H1 (cell line): ENCODE measurements at regions of chr6 and their contacts with region 1.

Region 1: DNA sequence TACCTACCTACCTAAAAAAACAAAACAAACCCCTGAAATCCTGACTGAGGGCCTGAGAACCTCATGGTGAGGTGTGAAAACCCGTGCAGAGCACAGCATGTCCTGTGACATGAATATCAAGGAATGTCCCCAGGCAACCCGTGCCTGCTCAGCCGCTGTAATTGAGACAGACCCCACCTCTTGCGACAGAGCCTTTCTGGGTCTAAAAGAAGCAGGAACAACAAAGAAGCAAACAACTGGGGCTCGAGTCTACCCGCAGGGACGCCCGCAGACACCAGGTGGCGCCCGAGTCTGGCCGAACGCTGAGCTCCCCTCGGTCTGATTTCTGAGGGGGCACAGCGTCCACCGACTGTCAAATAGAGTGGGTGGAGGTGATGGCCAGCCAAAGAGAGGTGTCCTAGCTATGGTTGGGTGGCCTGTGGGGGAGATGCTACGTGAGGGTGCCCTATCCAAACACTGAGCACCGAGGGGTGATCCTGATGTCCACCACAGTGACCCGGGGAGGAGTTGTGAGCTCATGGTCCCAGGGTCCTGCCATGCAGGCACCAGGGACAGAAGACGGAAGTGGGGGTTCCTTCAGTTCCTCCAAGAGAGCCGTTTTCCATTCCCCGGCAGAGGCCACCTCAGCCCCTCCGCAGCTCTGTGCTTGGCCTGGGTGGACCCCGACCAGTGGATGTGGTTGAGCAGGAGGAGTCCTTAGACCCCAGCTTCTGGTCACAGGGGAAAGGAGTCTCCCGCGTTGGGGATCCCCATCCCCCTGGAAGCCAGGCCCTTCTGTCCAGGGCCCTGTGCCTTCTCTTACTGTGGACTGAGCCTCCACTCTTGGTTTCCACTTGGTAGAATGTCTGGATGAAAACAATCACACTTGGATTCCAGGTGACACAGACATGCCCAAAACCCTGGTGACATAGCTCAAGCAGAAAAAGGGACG is 268.2 kb downstream of the CDC5L start:
- DNase-seq: peak; percentile 77 to 97
- H3K4me3 ChIP-seq: no peak overlapping the region
- H3K27ac ChIP-seq: no peak overlapping the region
- H3K4me1 ChIP-seq: no peaks in the 10 kb centered on the region; a peak in 3 of 7 replicates
- H3K27me3 ChIP-seq: no peaks in the 10 kb centered on the region; a peak in 1 of 7 replicates
- CTCF ChIP-seq: peak; percentile 88 to 94 (median 91)
- EP300 ChIP-seq: no peak
- POLR2A ChIP-seq: no peak
- RAD21 ChIP-seq: peak; percentile 99 to 100

Region 2: DNA sequence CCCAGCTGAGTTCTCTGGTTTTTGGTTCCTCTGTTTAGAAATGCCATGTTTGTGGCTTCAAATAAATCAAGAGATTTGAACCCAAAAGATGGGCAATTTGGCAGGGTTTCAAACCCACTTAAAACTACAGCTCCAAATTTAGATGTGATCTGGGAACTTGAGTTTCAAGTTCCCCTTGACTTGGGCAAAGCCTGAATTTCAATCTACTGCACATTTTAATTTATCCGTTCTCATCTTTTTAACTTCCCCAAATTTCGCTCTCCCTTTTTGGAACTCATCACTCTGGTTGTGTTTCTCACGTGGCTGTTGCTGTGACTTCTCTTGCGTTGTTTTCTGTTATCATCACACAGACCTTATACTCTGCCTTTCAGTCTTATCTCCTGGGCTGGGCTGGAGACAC is 37.3 kb before region 1 on chr6:
- CTCF ChIA-PET with region 1: interaction called, 11 read pairs
- POLR2A ChIA-PET with region 1: no interaction called
- DNase-seq: no peak
- H3K4me3 ChIP-seq: no peak overlapping the region
- H3K27ac ChIP-seq: no peak overlapping the region
- H3K4me1 ChIP-seq: peaks cover 0 to 10% (median 5%) of the 10 kb centered on the region in 4 experiments; a peak in 3 of 7 replicates
- H3K27me3 ChIP-seq: 0 out of 7 replicates have a peak, but pooled peaks cover 0 to 2% (median 0%) of the 10 kb centered on the region in 4 experiments
- CTCF ChIP-seq: no peak
- EP300 ChIP-seq: no peak
- POLR2A ChIP-seq: no peak
- RAD21 ChIP-seq: no peak

Region 3: DNA sequence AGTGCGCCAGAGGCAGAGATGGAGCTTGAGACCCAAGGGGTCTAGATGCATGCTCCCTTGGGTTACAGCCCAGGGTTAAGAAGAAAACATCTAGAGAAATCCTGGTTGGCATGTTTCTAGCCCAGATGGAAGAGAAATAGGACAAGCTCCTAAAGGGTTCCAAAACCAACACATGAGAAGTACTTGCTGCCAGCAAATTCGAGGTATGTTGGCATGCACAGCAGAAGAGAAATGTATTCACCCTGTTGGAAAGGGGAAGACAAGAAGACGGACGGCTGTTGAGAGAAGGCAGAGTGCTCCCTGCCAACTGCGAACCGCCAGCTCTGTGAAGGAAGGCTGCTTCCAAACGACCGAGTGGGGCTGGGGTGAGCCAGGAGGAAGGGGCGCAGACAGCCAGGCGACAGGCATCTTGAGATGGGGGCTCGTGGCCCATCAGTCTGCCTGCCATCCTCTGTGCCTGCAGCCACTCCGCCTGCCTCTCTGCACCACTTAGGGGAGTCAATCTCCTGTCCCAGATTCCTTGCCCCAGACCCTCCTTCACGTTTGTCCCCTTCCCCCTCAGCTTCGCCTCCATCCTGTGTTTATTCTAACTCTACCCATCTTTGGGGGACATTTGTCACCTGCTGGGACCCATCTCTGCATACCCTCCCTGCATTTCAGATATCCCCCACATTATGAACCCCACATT is 19.0 kb before region 1 on chr6:
- CTCF ChIA-PET with region 1: interaction called, 19 read pairs
- POLR2A ChIA-PET with region 1: interaction called, 3 read pairs
- DNase-seq: no peak
- H3K4me3 ChIP-seq: no peak overlapping the region
- H3K27ac ChIP-seq: no peak overlapping the region
- H3K4me1 ChIP-seq: no peaks in the 10 kb centered on the region
- H3K27me3 ChIP-seq: no peaks in the 10 kb centered on the region
- CTCF ChIP-seq: no peak
- EP300 ChIP-seq: no peak
- POLR2A ChIP-seq: no peak
- RAD21 ChIP-seq: no peak

Region 4: GRCh38 chr6:44667668-44668390 is 12.2 kb after region 1 on chr6:
- CTCF ChIA-PET with region 1: interaction called, 29 read pairs
- POLR2A ChIA-PET with region 1: interaction called, 7 read pairs
- DNase-seq: peak in 1 of 2 experiments; percentile 75
- H3K4me3 ChIP-seq: no peak overlapping the region
- H3K27ac ChIP-seq: no peak overlapping the region
- H3K4me1 ChIP-seq: peaks cover 6 to 39% (median 27%) of the 10 kb centered on the region in 4 experiments
- H3K27me3 ChIP-seq: no peaks in the 10 kb centered on the region; a peak in 1 of 7 replicates
- CTCF ChIP-seq: peak; percentile 55 to 81 (median 78)
- EP300 ChIP-seq: no peak
- POLR2A ChIP-seq: no peak
- RAD21 ChIP-seq: peak; percentile 49 to 67

Region 5: GRCh38 chr6:44701637-44702101 is 46.0 kb after region 1 on chr6:
- CTCF ChIA-PET with region 1: interaction called, 10 read pairs
- POLR2A ChIA-PET with region 1: interaction called, 3 read pairs
- DNase-seq: peak; percentile 19 to 49
- H3K4me3 ChIP-seq: no peak overlapping the region
- H3K27ac ChIP-seq: no peak overlapping the region
- H3K4me1 ChIP-seq: peaks cover 0 to 9% (median 3%) of the 10 kb centered on the region in 4 experiments; a peak in 3 of 7 replicates
- H3K27me3 ChIP-seq: no peaks in the 10 kb centered on the region; a peak in 1 of 7 replicates
- CTCF ChIP-seq: no peak
- EP300 ChIP-seq: no peak
- POLR2A ChIP-seq: no peak
- RAD21 ChIP-seq: no peak

Region 6: GRCh38 chr6:44826025-44826676 is 170.5 kb after region 1 on chr6:
- CTCF ChIA-PET with region 1: interaction called, 14 read pairs
- POLR2A ChIA-PET with region 1: no interaction called
- DNase-seq: no peak
- H3K4me3 ChIP-seq: no peak overlapping the region
- H3K27ac ChIP-seq: no peak overlapping the region
- H3K4me1 ChIP-seq: peaks cover 0 to 4% (median 2%) of the 10 kb centered on the region in 4 experiments; a peak in 2 of 7 replicates
- H3K27me3 ChIP-seq: no peaks in the 10 kb centered on the region
- CTCF ChIP-seq: no peak
- EP300 ChIP-seq: no peak
- POLR2A ChIP-seq: no peak
- RAD21 ChIP-seq: no peak